Activated CD4-positive, alpha-beta memory T cell treated with anti-CD3 and anti-CD28 coated beads for 36 hours (primary cell): ENCODE measurements at regions of chr5 and their contacts with region 1.

Region 1: DNA sequence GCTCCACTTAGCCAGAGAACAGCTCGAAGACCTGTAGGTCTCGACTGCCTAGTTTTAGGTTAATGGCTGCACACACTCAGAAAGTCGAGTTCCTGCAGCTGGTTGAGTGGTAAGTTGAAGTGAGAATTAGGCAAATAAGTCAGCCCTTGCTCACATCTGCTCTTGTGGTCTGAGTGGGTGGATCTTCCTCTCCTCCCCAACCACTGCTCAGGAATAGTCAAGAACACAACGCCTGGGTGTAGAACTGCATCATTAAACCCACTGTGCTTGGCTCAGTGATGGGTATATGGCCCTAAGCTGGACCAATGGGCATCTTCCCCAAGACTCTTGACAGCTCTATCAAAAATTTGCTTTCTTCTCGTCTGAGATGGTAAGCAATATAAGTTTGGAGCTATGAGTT is 20.9 kb upstream of the ADAM19 start:
- DNase-seq: peak; percentile 83
- H3K4me3 Mint-ChIP-seq: peak overlapping the region; percentile 11
- H3K27ac Mint-ChIP-seq: peak overlapping the region; percentile 91
- H3K4me1 Mint-ChIP-seq: peaks cover 95% of the 10 kb centered on the region
- H3K27me3 Mint-ChIP-seq: no peaks in the 10 kb centered on the region

Region 2: DNA sequence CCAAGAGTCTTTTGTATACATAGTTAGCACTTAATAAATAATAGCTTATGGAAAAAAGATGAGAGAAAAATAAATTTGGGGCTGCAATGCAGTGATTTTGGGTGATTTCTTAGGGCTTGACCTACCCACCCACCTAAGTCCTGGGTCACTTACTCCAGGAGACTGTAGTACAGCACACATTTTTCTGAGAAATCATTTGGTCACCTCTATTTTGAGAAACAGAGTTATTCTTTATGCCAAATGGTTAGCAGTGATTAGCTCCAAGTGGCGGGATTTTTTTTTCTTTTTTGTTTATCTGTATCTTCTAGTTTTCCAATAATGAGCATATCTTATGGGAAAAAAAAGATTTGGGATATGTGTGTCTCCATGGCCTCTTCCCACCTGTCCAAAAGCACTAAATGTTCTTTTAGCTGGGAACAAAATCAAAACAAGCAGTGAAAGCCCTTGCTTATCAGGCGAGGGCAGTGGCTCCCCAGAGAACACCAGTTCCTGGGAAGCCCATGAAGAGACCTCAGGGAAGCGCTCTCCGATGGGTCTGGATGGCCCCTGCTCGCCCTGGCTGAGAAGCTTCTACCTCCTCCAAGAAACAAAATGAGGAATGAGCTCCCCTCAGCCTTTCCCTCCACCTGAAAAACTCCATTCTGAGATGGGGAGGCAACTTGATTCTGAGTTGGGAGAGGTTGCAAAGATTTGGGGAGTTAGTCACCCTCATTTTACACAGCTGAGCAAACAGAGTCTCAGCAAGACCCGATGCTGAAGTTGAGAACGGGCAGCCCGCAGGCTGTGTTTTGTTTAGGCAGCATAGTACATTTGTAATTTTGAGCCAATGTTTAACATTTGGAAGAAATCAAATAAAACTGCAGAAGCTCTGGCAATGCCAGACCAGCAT is 260.7 kb before region 1 on chr5:
- CTCF ChIA-PET with region 1: no interaction called
- POLR2A ChIA-PET with region 1: no interaction called
- intact Hi-C with region 1: no loop called
- DNase-seq: no peak
- H3K4me3 Mint-ChIP-seq: no peak overlapping the region
- H3K27ac Mint-ChIP-seq: no peak overlapping the region
- H3K4me1 Mint-ChIP-seq: peaks cover 15% of the 10 kb centered on the region
- H3K27me3 Mint-ChIP-seq: no peaks in the 10 kb centered on the region

Region 3: GRCh38 chr5:157366741-157367674 is 229.5 kb before region 1 on chr5:
- CTCF ChIA-PET with region 1: no interaction called
- POLR2A ChIA-PET with region 1: no interaction called
- intact Hi-C with region 1: no loop called
- DNase-seq: no peak
- H3K4me3 Mint-ChIP-seq: no peak overlapping the region
- H3K27ac Mint-ChIP-seq: no peak overlapping the region
- H3K4me1 Mint-ChIP-seq: peaks cover 11% of the 10 kb centered on the region
- H3K27me3 Mint-ChIP-seq: no peaks in the 10 kb centered on the region

Region 4: GRCh38 chr5:157415838-157416237 is 180.6 kb before region 1 on chr5:
- CTCF ChIA-PET with region 1: no interaction called
- POLR2A ChIA-PET with region 1: no interaction called
- intact Hi-C with region 1: no loop called
- DNase-seq: no peak
- H3K4me3 Mint-ChIP-seq: no peak overlapping the region
- H3K27ac Mint-ChIP-seq: no peak overlapping the region
- H3K4me1 Mint-ChIP-seq: no peaks in the 10 kb centered on the region
- H3K27me3 Mint-ChIP-seq: no peaks in the 10 kb centered on the region

Region 5: GRCh38 chr5:157548513-157549297 is 47.8 kb before region 1 on chr5:
- CTCF ChIA-PET with region 1: interaction called, 7 read pairs
- POLR2A ChIA-PET with region 1: interaction called, 10 read pairs
- intact Hi-C with region 1: loop called (anchors 1 kb)
- DNase-seq: no peak
- H3K4me3 Mint-ChIP-seq: peak overlapping the region; percentile 20
- H3K27ac Mint-ChIP-seq: peak overlapping the region; percentile 69
- H3K4me1 Mint-ChIP-seq: peaks cover 91% of the 10 kb centered on the region
- H3K27me3 Mint-ChIP-seq: no peaks in the 10 kb centered on the region

Region 6: GRCh38 chr5:157582731-157583620 is 13.5 kb before region 1 on chr5:
- CTCF ChIA-PET with region 1: interaction called, 18 read pairs
- POLR2A ChIA-PET with region 1: interaction called, 4 read pairs
- intact Hi-C with region 1: loop called (anchors 1 kb)
- DNase-seq: no peak
- H3K4me3 Mint-ChIP-seq: no peak overlapping the region
- H3K27ac Mint-ChIP-seq: peak overlapping the region; percentile 72
- H3K4me1 Mint-ChIP-seq: peaks cover 50% of the 10 kb centered on the region
- H3K27me3 Mint-ChIP-seq: no peaks in the 10 kb centered on the region